A673 (cell line): ENCODE measurements at regions of chr15 and their contacts with region 1.

Region 1: GRCh38 chr15:66715181-66715624 is 13.2 kb downstream of the SMAD6 start:
- DNase-seq: no peak
- H3K4me3 ChIP-seq: peak overlapping the region; percentile 1
- H3K27ac ChIP-seq: peak overlapping the region; percentile 83
- H3K4me1 ChIP-seq: peaks cover 67% of the 10 kb centered on the region
- H3K27me3 ChIP-seq: no peaks in the 10 kb centered on the region
- CTCF ChIP-seq: no peak

Region 2: GRCh38 chr15:66046751-66047150 is 668.5 kb before region 1 on chr15:
- CTCF ChIA-PET with region 1: no interaction called
- POLR2A ChIA-PET with region 1: no interaction called
- intact Hi-C with region 1: no loop called
- DNase-seq: no peak
- H3K4me3 ChIP-seq: no peak overlapping the region
- H3K27ac ChIP-seq: no peak overlapping the region
- H3K4me1 ChIP-seq: no peaks in the 10 kb centered on the region
- H3K27me3 ChIP-seq: peaks cover 25% of the 10 kb centered on the region
- CTCF ChIP-seq: no peak

Region 3: GRCh38 chr15:66765478-66766281 is 50.5 kb after region 1 on chr15:
- CTCF ChIA-PET with region 1: no interaction called
- POLR2A ChIA-PET with region 1: no interaction called
- intact Hi-C with region 1: loop called (anchors 5 kb)
- DNase-seq: peak; percentile 97
- H3K4me3 ChIP-seq: no peak overlapping the region
- H3K27ac ChIP-seq: peak overlapping the region; percentile 67
- H3K4me1 ChIP-seq: peaks cover 77% of the 10 kb centered on the region
- H3K27me3 ChIP-seq: no peaks in the 10 kb centered on the region
- CTCF ChIP-seq: no peak

Region 4: GRCh38 chr15:66862878-66863335 is 147.7 kb after region 1 on chr15:
- CTCF ChIA-PET with region 1: no interaction called
- POLR2A ChIA-PET with region 1: interaction called, 13 read pairs
- intact Hi-C with region 1: no loop called
- DNase-seq: peak; percentile 89
- H3K4me3 ChIP-seq: no peak overlapping the region
- H3K27ac ChIP-seq: no peak overlapping the region
- H3K4me1 ChIP-seq: no peaks in the 10 kb centered on the region
- H3K27me3 ChIP-seq: no peaks in the 10 kb centered on the region
- CTCF ChIP-seq: peak; percentile 95